Calu3 (cell line): ENCODE measurements at regions of chr5 and their contacts with region 1.

Region 1: GRCh38 chr5:74408150-74409043 is 232.1 kb downstream of the ENC1 start:
- DNase-seq: no peak
- H3K4me3 Mint-ChIP-seq: peak overlapping the region; percentile 63
- H3K27ac Mint-ChIP-seq: peak overlapping the region; percentile 82
- H3K4me1 Mint-ChIP-seq: peaks cover 54% of the 10 kb centered on the region
- H3K27me3 Mint-ChIP-seq: no peaks in the 10 kb centered on the region
- CTCF ChIP-seq: no peak

Region 2: DNA sequence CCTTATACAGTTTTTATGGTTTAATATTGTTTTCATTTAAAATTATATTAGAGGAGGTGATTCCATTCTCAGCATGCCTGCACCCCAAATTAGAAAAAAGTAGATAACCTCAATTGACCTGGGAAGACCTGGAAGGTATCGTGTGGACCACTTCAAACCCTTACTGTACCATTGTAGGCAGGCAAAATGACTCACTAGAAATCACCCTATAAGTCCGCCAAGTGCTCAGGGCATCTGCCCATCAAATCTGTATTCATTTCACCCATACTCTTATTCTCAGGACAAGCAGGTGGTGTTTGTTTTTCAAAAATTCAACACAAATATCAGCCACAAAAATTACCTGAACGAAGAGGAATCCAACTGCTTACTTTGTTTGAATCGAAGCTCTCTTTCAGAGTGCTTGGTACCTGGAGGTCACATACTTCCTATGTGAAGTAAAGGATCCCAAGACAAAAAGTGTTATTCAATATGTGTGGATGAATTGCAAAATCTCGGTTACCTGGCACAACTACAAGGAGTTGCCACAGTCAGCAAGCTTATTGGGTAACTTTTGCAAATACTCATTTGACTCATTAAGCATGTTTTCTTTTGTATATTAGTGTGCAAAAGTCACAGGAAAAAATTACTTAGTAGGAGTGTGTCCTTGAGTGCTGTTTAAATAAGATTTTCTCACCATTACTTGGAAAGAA is 15.9 kb after region 1 on chr5:
- CTCF ChIA-PET with region 1: interaction called, 3 read pairs
- intact Hi-C with region 1: loop called (anchors 2 kb)
- DNase-seq: peak; percentile 55
- H3K4me3 Mint-ChIP-seq: no peak overlapping the region
- H3K27ac Mint-ChIP-seq: no peak overlapping the region
- H3K4me1 Mint-ChIP-seq: peaks cover 23% of the 10 kb centered on the region
- H3K27me3 Mint-ChIP-seq: no peaks in the 10 kb centered on the region
- CTCF ChIP-seq: no peak

Region 3: GRCh38 chr5:74476046-74476818 is 67.8 kb after region 1 on chr5:
- CTCF ChIA-PET with region 1: no interaction called
- intact Hi-C with region 1: no loop called
- DNase-seq: no peak
- H3K4me3 Mint-ChIP-seq: no peak overlapping the region
- H3K27ac Mint-ChIP-seq: no peak overlapping the region
- H3K4me1 Mint-ChIP-seq: no peaks in the 10 kb centered on the region
- H3K27me3 Mint-ChIP-seq: no peaks in the 10 kb centered on the region
- CTCF ChIP-seq: no peak